Activated CD4-positive, alpha-beta memory T cell treated with anti-CD3 and anti-CD28 coated beads, Interleukin-2, amount 10 ng/mL, durations not matched to agents 7 days and 5 days (primary cell): ENCODE measurements at regions of chr7 and their contacts with region 1.

Region 1: DNA sequence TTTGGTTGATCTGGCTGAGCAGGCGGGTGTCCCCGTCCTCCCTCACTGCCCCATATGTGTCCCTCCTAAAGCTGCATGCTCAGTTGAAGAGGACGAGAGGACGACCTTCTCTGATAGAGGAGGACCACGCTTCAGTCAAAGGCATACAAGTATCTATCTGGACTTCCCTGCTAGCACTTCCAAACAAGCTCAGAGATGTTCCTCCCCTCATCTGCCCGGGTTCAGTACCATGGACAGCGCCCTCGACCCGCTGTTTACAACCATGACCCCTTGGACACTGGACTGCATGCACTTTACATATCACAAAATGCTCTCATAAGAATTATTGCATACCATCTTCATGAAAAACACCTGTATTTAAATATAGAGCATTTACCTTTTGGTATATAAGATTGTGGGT is 26.9 kb upstream of the TRIM56 start:
- DNase-seq: peak; percentile 61
- H3K4me3 Mint-ChIP-seq: no peak overlapping the region
- H3K27ac Mint-ChIP-seq: no peak overlapping the region
- H3K4me1 Mint-ChIP-seq: no peaks in the 10 kb centered on the region
- H3K27me3 Mint-ChIP-seq: peaks cover 18% of the 10 kb centered on the region

Region 2: GRCh38 chr7:100889761-100890634 is 168.4 kb before region 1 on chr7:
- CTCF ChIA-PET with region 1: interaction called, 12 read pairs
- POLR2A ChIA-PET with region 1: no interaction called
- DNase-seq: peak; percentile 92
- H3K4me3 Mint-ChIP-seq: peak overlapping the region; percentile 78
- H3K27ac Mint-ChIP-seq: peak overlapping the region; percentile 16
- H3K4me1 Mint-ChIP-seq: peaks cover 52% of the 10 kb centered on the region
- H3K27me3 Mint-ChIP-seq: peaks cover 32% of the 10 kb centered on the region

Region 3: DNA sequence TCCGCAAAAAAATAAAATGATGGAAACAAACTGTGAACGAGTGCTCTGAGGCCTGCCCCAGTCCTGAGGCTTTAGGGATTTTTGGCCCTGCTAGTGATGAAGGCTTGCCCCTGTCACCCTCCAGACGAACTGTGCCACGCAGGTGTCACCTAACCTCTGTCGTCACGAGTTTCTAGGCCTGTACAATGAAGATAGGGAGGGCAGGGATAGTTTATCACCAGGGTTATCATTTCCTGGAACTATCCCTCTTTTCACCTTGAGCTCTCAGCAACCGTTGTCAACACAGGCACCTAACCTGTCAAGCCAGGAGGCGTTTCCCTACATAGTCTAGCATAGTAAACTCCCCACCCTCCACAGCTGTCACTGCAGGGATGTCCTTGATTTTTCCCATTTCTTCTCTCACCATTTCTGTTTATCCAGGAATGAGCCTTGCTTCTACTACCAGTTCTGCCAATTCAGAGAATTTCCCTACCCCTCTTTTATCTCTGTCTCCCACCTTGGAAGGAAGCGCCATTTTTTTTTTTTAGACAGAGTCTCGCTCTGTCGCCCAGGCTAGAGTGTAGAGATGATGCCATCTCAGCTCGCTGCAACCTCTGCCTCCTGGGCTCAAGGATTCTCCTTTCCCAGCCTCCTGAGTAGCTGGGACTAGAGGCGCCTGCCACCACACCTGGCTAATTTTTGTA is 160.4 kb before region 1 on chr7:
- CTCF ChIA-PET with region 1: interaction called, 23 read pairs
- POLR2A ChIA-PET with region 1: no interaction called
- DNase-seq: no peak
- H3K4me3 Mint-ChIP-seq: no peak overlapping the region
- H3K27ac Mint-ChIP-seq: no peak overlapping the region
- H3K4me1 Mint-ChIP-seq: peaks cover 18% of the 10 kb centered on the region
- H3K27me3 Mint-ChIP-seq: peaks cover 43% of the 10 kb centered on the region

Region 4: DNA sequence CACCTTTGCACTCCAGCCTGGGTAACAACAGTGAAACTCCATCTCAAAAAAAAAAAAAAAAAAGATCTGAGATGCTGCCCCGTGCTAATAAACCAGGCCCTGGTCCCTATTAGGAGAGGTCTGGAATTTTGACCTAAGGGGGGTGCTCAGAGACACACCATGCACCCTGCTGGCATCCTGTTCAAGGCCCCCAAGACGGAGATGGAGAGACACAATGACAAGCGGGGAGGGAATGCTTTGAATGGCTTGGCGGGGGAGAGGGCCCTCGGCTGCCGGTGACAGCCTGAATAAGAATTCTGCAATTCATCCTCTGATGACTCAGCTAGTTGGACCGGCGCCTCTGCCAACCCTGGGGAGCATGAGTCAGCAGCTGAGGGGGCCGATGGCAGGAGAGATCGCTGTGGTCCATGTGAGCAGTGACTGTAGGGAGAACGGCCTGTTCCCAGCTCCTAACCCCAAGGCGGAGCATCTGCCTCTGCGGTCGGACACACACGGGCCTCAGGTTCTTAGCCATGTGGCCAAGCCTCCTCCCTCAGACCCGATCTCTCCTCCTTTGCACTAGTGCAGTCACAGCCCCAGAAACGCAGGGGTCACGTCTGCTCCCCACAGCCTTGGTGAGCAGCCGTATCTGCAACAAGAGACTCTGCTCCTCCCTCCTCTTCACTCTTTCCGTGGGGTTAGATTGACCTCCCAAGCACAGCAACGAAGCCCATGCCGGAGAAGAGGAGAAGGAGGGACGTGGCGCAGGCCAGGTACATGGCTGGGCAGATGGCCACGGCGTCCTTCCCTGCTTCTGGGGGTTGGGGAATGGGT is 41.8 kb after region 1 on chr7:
- CTCF ChIA-PET with region 1: no interaction called
- POLR2A ChIA-PET with region 1: no interaction called
- DNase-seq: peak; percentile 57
- H3K4me3 Mint-ChIP-seq: no peak overlapping the region
- H3K27ac Mint-ChIP-seq: no peak overlapping the region
- H3K4me1 Mint-ChIP-seq: peaks cover 8% of the 10 kb centered on the region
- H3K27me3 Mint-ChIP-seq: peaks cover 34% of the 10 kb centered on the region